Calu3 (cell line): ENCODE measurements at regions of chr18 and their contacts with region 1.

Region 1: DNA sequence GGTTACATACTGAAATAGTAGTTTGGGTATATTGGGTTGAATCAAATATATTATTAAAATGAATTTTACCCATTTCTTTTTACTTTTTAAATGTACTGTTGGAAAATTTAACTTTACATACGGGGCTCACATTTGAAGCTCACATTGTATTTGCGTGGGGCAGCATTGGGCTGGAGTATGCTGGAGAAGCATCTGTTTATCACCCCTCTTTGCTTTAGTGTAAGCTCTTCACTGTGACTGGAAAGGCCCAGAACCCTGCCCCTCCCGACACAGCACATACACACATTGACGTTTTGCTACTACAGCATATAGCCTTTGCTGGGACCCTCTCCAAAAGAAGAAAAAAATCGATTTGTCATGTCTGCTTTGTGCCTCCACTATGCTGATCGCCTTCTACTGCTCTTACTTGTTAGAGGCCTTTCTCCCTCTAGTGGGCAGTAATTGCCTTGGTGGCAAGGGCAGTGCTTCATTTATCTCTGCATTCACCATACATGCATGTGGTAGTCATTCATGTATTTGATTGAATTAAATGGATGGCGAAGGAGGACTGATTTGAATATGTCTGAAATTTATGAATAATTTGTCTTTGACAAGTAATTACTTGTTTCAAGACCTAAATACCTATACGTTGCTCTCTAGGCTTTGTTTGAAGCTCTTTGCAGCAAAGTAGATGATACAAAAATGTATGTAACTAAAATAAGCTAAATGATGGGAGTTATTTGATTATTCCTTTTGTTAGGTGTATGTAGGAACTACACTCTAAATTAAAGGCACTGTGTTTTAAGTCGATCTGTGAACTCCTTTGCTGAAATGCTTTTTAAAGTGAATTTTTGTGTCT is 37.4 kb downstream of the VAPA start:
- DNase-seq: peak; percentile 41
- H3K4me3 Mint-ChIP-seq: no peak overlapping the region
- H3K27ac Mint-ChIP-seq: peak overlapping the region; percentile 70
- H3K4me1 Mint-ChIP-seq: peaks cover 16% of the 10 kb centered on the region
- H3K27me3 Mint-ChIP-seq: no peaks in the 10 kb centered on the region
- CTCF ChIP-seq: peak; percentile 65

Region 2: GRCh38 chr18:9792565-9793245 is 158.5 kb before region 1 on chr18:
- CTCF ChIA-PET with region 1: no interaction called
- intact Hi-C with region 1: loop called (anchors 10 kb)
- DNase-seq: peak; percentile 37
- H3K4me3 Mint-ChIP-seq: no peak overlapping the region
- H3K27ac Mint-ChIP-seq: no peak overlapping the region
- H3K4me1 Mint-ChIP-seq: no peaks in the 10 kb centered on the region
- H3K27me3 Mint-ChIP-seq: no peaks in the 10 kb centered on the region
- CTCF ChIP-seq: peak; percentile 65

Region 3: GRCh38 chr18:9965711-9966624 is 14.7 kb after region 1 on chr18:
- CTCF ChIA-PET with region 1: no interaction called
- intact Hi-C with region 1: no loop called
- DNase-seq: no peak
- H3K4me3 Mint-ChIP-seq: no peak overlapping the region
- H3K27ac Mint-ChIP-seq: no peak overlapping the region
- H3K4me1 Mint-ChIP-seq: peaks cover 15% of the 10 kb centered on the region
- H3K27me3 Mint-ChIP-seq: peaks cover 16% of the 10 kb centered on the region
- CTCF ChIP-seq: no peak